Activated CD8-positive, alpha-beta T cell treated with anti-CD3 and anti-CD28 coated beads for 36 hours (primary cell): ENCODE measurements at regions of chrX and their contacts with region 1.

Region 1: GRCh38 chrX:129781134-129781672 is 1.5 kb downstream of the SASH3 start:
- DNase-seq: peak; percentile 93
- ATAC-seq: peak; percentile 81
- H3K4me3 Mint-ChIP-seq: peak overlapping the region; percentile 83
- H3K27ac Mint-ChIP-seq: peak overlapping the region; percentile 95
- H3K4me1 Mint-ChIP-seq: peaks cover 48% of the 10 kb centered on the region
- H3K27me3 Mint-ChIP-seq: no peaks in the 10 kb centered on the region
- CTCF ChIP-seq: no peak

Region 2: DNA sequence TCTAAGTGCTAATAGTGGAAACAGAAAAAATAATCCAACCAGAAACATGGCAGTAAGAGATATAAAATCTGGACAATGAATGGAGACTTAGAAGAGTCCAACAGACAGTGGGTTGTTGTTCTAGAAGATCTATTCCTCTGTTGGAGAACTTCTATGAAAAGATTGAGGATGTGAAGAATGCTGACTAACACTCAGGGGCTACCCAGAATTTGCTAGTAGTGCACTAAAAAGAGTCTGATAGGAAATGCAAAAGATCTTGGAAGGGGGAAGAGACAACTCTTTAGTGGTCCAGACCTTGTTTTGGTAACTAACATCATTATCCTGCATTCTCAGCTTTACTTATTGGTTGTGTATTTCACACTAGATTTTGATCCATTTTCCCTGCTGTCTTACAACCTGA is 335.8 kb before region 1 on chrX:
- CTCF ChIA-PET with region 1: no interaction called
- POLR2A ChIA-PET with region 1: no interaction called
- intact Hi-C with region 1: no loop called
- DNase-seq: no peak
- ATAC-seq: no peak
- H3K4me3 Mint-ChIP-seq: no peak overlapping the region
- H3K27ac Mint-ChIP-seq: no peak overlapping the region
- H3K4me1 Mint-ChIP-seq: no peaks in the 10 kb centered on the region
- H3K27me3 Mint-ChIP-seq: no peaks in the 10 kb centered on the region
- CTCF ChIP-seq: no peak

Region 3: GRCh38 chrX:129748305-129748704 is 32.9 kb before region 1 on chrX:
- CTCF ChIA-PET with region 1: no interaction called
- POLR2A ChIA-PET with region 1: interaction called, 3 read pairs
- intact Hi-C with region 1: loop called (anchors 5 kb)
- DNase-seq: no peak
- ATAC-seq: no peak
- H3K4me3 Mint-ChIP-seq: no peak overlapping the region
- H3K27ac Mint-ChIP-seq: no peak overlapping the region
- H3K4me1 Mint-ChIP-seq: peaks cover 27% of the 10 kb centered on the region
- H3K27me3 Mint-ChIP-seq: no peaks in the 10 kb centered on the region
- CTCF ChIP-seq: no peak

Region 4: DNA sequence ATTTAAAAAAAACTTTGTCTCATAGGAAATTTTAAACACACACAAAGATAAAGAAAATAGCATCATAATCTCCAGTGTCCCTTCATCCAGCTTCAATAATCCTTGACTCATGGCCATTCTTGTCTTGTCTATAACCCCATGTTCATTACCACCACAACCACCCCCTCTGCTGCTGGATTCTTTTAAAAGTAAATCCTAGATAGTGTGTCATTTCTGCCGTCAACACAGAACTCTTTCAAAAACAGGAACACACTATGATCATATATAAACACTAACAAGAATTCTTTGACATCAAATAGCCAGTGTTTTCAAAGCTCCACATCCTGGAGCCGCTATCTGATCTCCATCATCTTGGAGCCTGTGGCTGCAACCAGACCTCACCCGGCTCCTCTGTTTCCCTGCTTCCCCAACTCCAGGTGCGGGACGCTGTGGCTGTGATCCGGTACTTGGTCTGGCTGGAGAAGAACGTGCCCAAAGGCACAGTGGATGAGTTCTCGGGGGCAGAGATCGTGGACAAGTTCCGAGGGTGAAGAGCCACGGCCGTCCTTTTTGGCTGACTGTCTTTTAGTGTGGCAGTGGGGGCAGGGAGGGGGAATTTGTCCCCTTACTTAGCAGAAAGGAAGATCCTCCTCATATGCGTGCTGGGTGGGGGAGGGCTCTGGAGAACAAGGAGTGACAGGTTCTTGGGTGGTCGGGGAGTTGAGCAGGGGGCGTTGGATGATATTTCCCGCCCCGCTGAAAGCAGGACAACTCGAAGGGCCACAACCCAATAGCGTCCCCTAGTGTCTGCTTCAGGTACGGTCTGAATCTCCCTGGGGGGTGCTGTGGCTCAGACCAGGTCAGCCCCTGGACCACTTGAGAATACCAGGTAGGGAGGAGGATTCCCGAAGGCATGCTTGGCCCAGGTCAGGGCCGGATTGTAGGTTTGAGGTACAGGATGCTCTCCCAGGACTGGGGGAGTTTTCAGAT is 26.9 kb before region 1 on chrX:
- CTCF ChIA-PET with region 1: interaction called, 11 read pairs
- POLR2A ChIA-PET with region 1: interaction called, 36 read pairs
- intact Hi-C with region 1: loop called (anchors 5 kb)
- DNase-seq: peak; percentile 38
- ATAC-seq: no peak
- H3K4me3 Mint-ChIP-seq: no peak overlapping the region
- H3K27ac Mint-ChIP-seq: no peak overlapping the region
- H3K4me1 Mint-ChIP-seq: peaks cover 43% of the 10 kb centered on the region
- H3K27me3 Mint-ChIP-seq: no peaks in the 10 kb centered on the region
- CTCF ChIP-seq: peak; percentile 61

Region 5: DNA sequence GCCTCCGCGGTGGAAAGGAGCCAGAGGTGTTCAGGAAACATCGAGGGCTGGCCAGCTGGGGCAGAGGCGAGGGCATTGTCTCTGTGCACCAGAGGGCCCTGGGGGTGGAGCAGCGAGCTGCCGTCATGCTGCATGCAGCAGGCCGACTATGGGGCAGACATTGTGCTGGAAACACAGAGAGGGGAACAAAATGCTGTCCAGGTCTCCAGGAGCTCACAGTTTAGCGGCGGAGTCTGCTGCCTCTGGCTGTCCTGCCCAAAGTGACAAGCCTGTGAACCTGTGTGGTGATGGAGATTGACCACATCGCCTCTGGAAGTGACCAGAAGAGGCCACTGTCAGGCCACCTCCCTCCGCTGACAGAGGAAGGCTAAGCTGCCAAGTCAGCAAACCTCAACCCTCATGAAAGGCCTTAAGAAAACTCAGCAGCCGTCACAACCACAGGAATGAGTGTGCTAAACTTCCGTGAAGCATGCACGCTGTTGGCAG is 21.6 kb before region 1 on chrX:
- CTCF ChIA-PET with region 1: interaction called, 11 read pairs
- POLR2A ChIA-PET with region 1: interaction called, 36 read pairs
- intact Hi-C with region 1: no loop called
- DNase-seq: peak; percentile 77
- ATAC-seq: peak; percentile 75
- H3K4me3 Mint-ChIP-seq: peak overlapping the region; percentile 19
- H3K27ac Mint-ChIP-seq: peak overlapping the region; percentile 85
- H3K4me1 Mint-ChIP-seq: peaks cover 61% of the 10 kb centered on the region
- H3K27me3 Mint-ChIP-seq: no peaks in the 10 kb centered on the region
- CTCF ChIP-seq: no peak

Region 6: DNA sequence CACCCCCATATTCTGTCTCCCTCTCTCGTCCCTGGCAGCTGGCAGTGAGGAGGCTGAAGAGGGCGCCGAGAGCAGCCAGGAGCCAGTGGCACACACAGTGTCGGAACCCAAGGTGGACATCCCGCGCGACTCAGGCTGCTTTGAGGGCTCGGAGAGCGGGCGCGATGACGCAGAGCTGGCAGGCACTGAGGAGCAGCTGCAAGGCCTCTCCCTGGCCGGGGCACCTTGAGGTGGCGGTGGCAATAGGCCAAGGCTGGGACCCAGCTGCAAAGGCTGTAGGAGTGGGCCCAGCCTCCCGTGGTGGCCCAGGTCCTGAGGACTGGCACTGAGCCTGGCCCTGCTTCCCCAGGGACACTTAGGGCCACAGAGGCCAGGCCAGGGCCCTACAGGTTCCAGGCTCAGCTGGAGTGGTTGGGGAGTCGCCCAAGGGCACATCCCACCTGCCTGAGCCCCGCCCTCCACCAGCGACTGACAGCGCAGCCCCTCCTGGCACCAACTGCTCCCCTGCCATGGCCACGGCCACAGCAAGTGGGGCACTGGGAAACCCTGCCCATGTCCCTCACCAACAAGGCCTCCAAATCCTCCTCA is 12.5 kb after region 1 on chrX:
- CTCF ChIA-PET with region 1: interaction called, 3 read pairs
- POLR2A ChIA-PET with region 1: interaction called, 33 read pairs
- intact Hi-C with region 1: no loop called
- DNase-seq: no peak
- ATAC-seq: no peak
- H3K4me3 Mint-ChIP-seq: no peak overlapping the region
- H3K27ac Mint-ChIP-seq: peak overlapping the region; percentile 52
- H3K4me1 Mint-ChIP-seq: peaks cover 20% of the 10 kb centered on the region
- H3K27me3 Mint-ChIP-seq: no peaks in the 10 kb centered on the region
- CTCF ChIP-seq: no peak

Region 7: GRCh38 chrX:129798888-129799287 is 17.7 kb after region 1 on chrX:
- CTCF ChIA-PET with region 1: no interaction called
- POLR2A ChIA-PET with region 1: interaction called, 33 read pairs
- intact Hi-C with region 1: no loop called
- DNase-seq: peak; percentile 71
- ATAC-seq: peak; percentile 85
- H3K4me3 Mint-ChIP-seq: no peak overlapping the region
- H3K27ac Mint-ChIP-seq: peak overlapping the region; percentile 69
- H3K4me1 Mint-ChIP-seq: peaks cover 33% of the 10 kb centered on the region
- H3K27me3 Mint-ChIP-seq: no peaks in the 10 kb centered on the region
- CTCF ChIP-seq: no peak

Region 8: GRCh38 chrX:129905787-129906580 is 124.8 kb after region 1 on chrX and contains the start of gene UTP14A:
- CTCF ChIA-PET with region 1: no interaction called
- POLR2A ChIA-PET with region 1: interaction called, 5 read pairs
- intact Hi-C with region 1: loop called (anchors 10 kb)
- DNase-seq: peak; percentile 90
- ATAC-seq: peak; percentile 98
- H3K4me3 Mint-ChIP-seq: peak within 1 kb of the TSS; percentile 89
- H3K27ac Mint-ChIP-seq: peak within 1 kb of the TSS; percentile 92
- H3K4me1 Mint-ChIP-seq: peaks cover 25% of the 10 kb centered on the region
- H3K27me3 Mint-ChIP-seq: no peaks in the 10 kb centered on the region
- CTCF ChIP-seq: no peak
- total RNA-seq, gene UTP14A: 33.1 to 34.0 TPM